ENCODE measurements at regions of chr17 and their contacts with region 1.

Region 1: DNA sequence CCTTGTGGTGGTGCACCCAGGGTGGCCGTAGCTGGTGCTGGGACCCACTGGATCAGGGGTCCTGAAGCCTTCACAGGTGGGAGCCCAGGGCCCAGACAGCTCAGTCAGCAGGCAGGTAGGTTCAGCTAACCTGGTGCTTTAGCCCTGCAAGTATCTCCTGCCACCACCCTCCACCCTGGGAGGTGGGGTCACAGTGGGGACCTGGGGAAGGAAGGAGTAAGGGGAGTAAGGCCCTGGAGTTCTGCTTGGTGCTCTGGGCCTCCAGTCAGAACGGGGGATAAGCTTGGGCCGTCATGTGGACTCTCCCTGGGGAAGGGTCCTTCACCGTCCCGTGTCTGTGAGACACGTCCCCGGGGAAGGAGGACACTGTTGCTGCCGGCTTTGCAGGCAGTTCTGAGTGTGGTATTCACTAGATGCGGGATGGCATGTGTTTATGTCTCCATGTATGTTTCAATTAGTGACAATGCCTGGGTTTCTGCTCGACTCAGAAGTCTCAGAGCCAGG is 20.7 kb downstream of the SGSM2 start:
- DNase-seq: no peak
- H3K4me3 ChIP-seq: no peak overlapping the region
- H3K27ac ChIP-seq: peak overlapping the region; percentile 89
- H3K4me1 ChIP-seq: peaks cover 50% of the 10 kb centered on the region
- H3K27me3 ChIP-seq: no peaks in the 10 kb centered on the region
- CTCF ChIP-seq: no peak

Region 2: GRCh38 chr17:2101448-2102257 is 256.3 kb before region 1 on chr17:
- CTCF ChIA-PET with region 1: no interaction called
- POLR2A ChIA-PET with region 1: no interaction called
- intact Hi-C with region 1: loop called (anchors 5 kb)
- DNase-seq: peak; percentile 96 to 99
- H3K4me3 ChIP-seq: no peak overlapping the region
- H3K27ac ChIP-seq: peak overlapping the region; percentile 77
- H3K4me1 ChIP-seq: peaks cover 17% of the 10 kb centered on the region
- H3K27me3 ChIP-seq: no peaks in the 10 kb centered on the region
- CTCF ChIP-seq: no peak

Region 3: GRCh38 chr17:2392252-2393173 is 34.5 kb after region 1 on chr17:
- CTCF ChIA-PET with region 1: no interaction called
- POLR2A ChIA-PET with region 1: interaction called, 6 read pairs
- intact Hi-C with region 1: loop called (anchors 2 kb)
- DNase-seq: peak; percentile 84 to 99
- H3K4me3 ChIP-seq: peak overlapping the region; percentile 70
- H3K27ac ChIP-seq: peak overlapping the region; percentile 84
- H3K4me1 ChIP-seq: peaks cover 32% of the 10 kb centered on the region
- H3K27me3 ChIP-seq: no peaks in the 10 kb centered on the region
- CTCF ChIP-seq: no peak

Region 4: GRCh38 chr17:2438823-2439222 is 80.8 kb after region 1 on chr17:
- CTCF ChIA-PET with region 1: no interaction called
- POLR2A ChIA-PET with region 1: no interaction called
- intact Hi-C with region 1: no loop called
- DNase-seq: no peak
- H3K4me3 ChIP-seq: no peak overlapping the region
- H3K27ac ChIP-seq: no peak overlapping the region
- H3K4me1 ChIP-seq: no peaks in the 10 kb centered on the region
- H3K27me3 ChIP-seq: no peaks in the 10 kb centered on the region
- CTCF ChIP-seq: no peak

Measured in PC-9 (cell line).